IMR-90 (cell line): ENCODE measurements at regions of chr2 and their contacts with region 1.

Region 1: GRCh38 chr2:202104278-202104870 is 31.3 kb downstream of the KIAA2012 start:
- DNase-seq: peak; percentile 54
- ATAC-seq: peak; percentile 89
- H3K4me3 ChIP-seq: no peak overlapping the region
- H3K27ac ChIP-seq: no peak overlapping the region
- H3K4me1 ChIP-seq: peaks cover 5% of the 10 kb centered on the region
- H3K27me3 ChIP-seq: no peaks in the 10 kb centered on the region
- CTCF ChIP-seq: peak; percentile 68
- POLR2A ChIP-seq: no peak
- RAD21 ChIP-seq: peak; percentile 79

Region 2: GRCh38 chr2:201926067-201926466 is 178.3 kb before region 1 on chr2:
- CTCF ChIA-PET with region 1: no interaction called
- POLR2A ChIA-PET with region 1: no interaction called
- dilution Hi-C with region 1: no loop called
- in situ Hi-C with region 1: no loop called
- intact Hi-C with region 1: no loop called
- DNase-seq: no peak
- ATAC-seq: no peak
- H3K4me3 ChIP-seq: no peak overlapping the region
- H3K27ac ChIP-seq: no peak overlapping the region
- H3K4me1 ChIP-seq: no peaks in the 10 kb centered on the region
- H3K27me3 ChIP-seq: peaks cover 2% of the 10 kb centered on the region; the same call in 1 of the 2 replicates
- CTCF ChIP-seq: no peak
- POLR2A ChIP-seq: no peak
- RAD21 ChIP-seq: no peak

Region 3: GRCh38 chr2:202149155-202149762 is 44.9 kb after region 1 on chr2:
- CTCF ChIA-PET with region 1: no interaction called
- POLR2A ChIA-PET with region 1: no interaction called
- dilution Hi-C with region 1: no loop called
- in situ Hi-C with region 1: no loop called
- intact Hi-C with region 1: loop called (anchors 5 kb)
- DNase-seq: peak; percentile 57
- ATAC-seq: peak; percentile 51
- H3K4me3 ChIP-seq: no peak overlapping the region
- H3K27ac ChIP-seq: peak overlapping the region; percentile 76
- H3K4me1 ChIP-seq: peaks cover 29% of the 10 kb centered on the region
- H3K27me3 ChIP-seq: no peaks in the 10 kb centered on the region
- CTCF ChIP-seq: no peak
- POLR2A ChIP-seq: no peak
- RAD21 ChIP-seq: no peak